Natural killer cell (primary cell): ENCODE measurements at regions of chr11 and their contacts with region 1.

Region 1: GRCh38 chr11:33742249-33742851 is 6.1 kb upstream of the CD59 start:
- DNase-seq: peak in 1 of 2 donors; percentile 53
- ATAC-seq: peak in 2 of 3 donors; percentile 66 to 67
- H3K4me3 ChIP-seq: no peak overlapping the region
- H3K4me3 Mint-ChIP-seq: no peak overlapping the region
- H3K27ac ChIP-seq: no peak overlapping the region
- H3K27ac Mint-ChIP-seq: no peak overlapping the region
- H3K4me1 ChIP-seq: no peaks in the 10 kb centered on the region
- H3K4me1 Mint-ChIP-seq: no peaks in the 10 kb centered on the region
- H3K27me3 ChIP-seq: no peaks in the 10 kb centered on the region
- H3K27me3 Mint-ChIP-seq: no peaks in the 10 kb centered on the region
- CTCF ChIP-seq: peak; percentile 55

Region 2: GRCh38 chr11:33542921-33543320 is 199.4 kb before region 1 on chr11:
- intact Hi-C with region 1: loop called (anchors 1 kb)
- DNase-seq: peak in 1 of 2 donors; percentile 56
- ATAC-seq: no peak
- H3K4me3 ChIP-seq: no peak overlapping the region
- H3K4me3 Mint-ChIP-seq: no peak overlapping the region
- H3K27ac ChIP-seq: no peak overlapping the region
- H3K27ac Mint-ChIP-seq: no peak overlapping the region
- H3K4me1 ChIP-seq: peaks cover 17% of the 10 kb centered on the region
- H3K4me1 Mint-ChIP-seq: peaks cover 0 to 13% of the 10 kb centered on the region in 2 donors
- H3K27me3 ChIP-seq: no peaks in the 10 kb centered on the region
- H3K27me3 Mint-ChIP-seq: peaks cover 12 to 19% of the 10 kb centered on the region in 2 donors
- CTCF ChIP-seq: no peak

Region 3: GRCh38 chr11:33716236-33716635 is 26.1 kb before region 1 on chr11:
- intact Hi-C with region 1: loop called (anchors 1 kb)
- DNase-seq: peak in 1 of 2 donors; percentile 51
- ATAC-seq: no peak
- H3K4me3 ChIP-seq: no peak overlapping the region
- H3K4me3 Mint-ChIP-seq: no peak overlapping the region
- H3K27ac ChIP-seq: no peak overlapping the region
- H3K27ac Mint-ChIP-seq: peak overlapping the region in 1 of 2 donors; percentile 18
- H3K4me1 ChIP-seq: no peaks in the 10 kb centered on the region
- H3K4me1 Mint-ChIP-seq: peaks cover 0 to under 1% of the 10 kb centered on the region in 2 donors
- H3K27me3 ChIP-seq: no peaks in the 10 kb centered on the region
- H3K27me3 Mint-ChIP-seq: no peaks in the 10 kb centered on the region
- CTCF ChIP-seq: no peak

Region 4: GRCh38 chr11:33936725-33937604 is 194.6 kb after region 1 on chr11:
- intact Hi-C with region 1: no loop called
- DNase-seq: no peak
- ATAC-seq: no peak
- H3K4me3 ChIP-seq: no peak overlapping the region
- H3K4me3 Mint-ChIP-seq: no peak overlapping the region
- H3K27ac ChIP-seq: no peak overlapping the region
- H3K27ac Mint-ChIP-seq: no peak overlapping the region
- H3K4me1 ChIP-seq: peaks cover 10% of the 10 kb centered on the region
- H3K4me1 Mint-ChIP-seq: peaks cover 12 to 25% of the 10 kb centered on the region in 2 donors
- H3K27me3 ChIP-seq: no peaks in the 10 kb centered on the region
- H3K27me3 Mint-ChIP-seq: peaks cover 16 to 24% of the 10 kb centered on the region in 2 donors
- CTCF ChIP-seq: no peak